ENCODE measurements at regions of chr4 and their contacts with region 1.

Region 1: GRCh38 chr4:57064811-57065711 is 45.1 kb downstream of the IGFBP7 start:
- DNase-seq: no peak

Region 2: DNA sequence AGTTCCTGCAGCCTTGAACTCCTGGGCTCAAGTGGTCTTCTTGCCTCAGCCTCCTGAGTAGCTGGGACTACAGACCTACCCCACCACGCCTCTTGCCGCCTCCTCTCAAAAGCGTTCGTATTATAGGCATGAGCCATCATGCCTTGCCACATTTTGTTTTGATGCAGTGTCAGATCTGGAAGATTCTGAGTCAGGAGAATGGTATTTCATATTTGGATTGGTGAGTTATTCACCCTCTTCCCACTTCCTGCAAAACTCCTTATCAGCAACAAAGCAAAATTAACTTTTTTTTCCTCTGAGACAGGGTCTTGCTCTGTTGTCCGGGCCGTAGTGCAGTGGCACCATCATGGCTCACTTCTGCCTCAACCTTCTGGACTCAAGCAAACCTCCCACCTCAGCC is 127.8 kb before region 1 on chr4:
- CTCF ChIA-PET with region 1: no interaction called
- POLR2A ChIA-PET with region 1: no interaction called
- DNase-seq: no peak

Region 3: DNA sequence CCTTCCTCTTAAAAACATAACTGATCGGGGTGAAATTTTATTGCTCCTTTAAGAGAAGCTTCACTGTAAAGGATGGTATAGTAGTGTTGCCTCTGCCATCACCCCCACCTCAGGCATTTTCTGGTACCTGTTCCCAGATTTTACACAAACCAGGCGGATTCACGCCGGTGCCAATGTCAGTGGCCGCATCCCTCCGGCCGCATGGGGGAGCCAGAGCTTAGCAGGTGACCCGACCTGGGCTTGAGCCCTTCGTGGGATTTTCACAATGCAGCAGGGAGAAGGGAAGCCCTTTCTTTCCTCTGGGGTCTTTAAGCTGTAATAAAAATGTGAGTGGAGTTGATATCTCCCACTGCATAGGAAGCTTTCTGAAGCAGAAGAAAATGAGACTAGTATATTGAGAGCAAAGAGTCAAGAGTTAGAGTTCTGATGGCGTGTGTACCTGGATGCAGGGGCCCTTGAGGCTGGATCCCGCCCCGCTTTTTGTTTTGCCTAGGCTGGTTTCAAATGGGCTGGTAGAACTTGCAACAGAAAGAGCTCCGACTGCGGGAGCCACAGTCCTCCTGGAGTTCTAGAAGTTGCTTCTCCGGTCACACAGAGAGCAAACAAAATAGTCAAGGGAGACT is 27.0 kb before region 1 on chr4:
- CTCF ChIA-PET with region 1: interaction called, 13 read pairs
- POLR2A ChIA-PET with region 1: no interaction called
- DNase-seq: peak; percentile 77